ENCODE measurements at regions of chr15 and their contacts with region 1.

Region 1: DNA sequence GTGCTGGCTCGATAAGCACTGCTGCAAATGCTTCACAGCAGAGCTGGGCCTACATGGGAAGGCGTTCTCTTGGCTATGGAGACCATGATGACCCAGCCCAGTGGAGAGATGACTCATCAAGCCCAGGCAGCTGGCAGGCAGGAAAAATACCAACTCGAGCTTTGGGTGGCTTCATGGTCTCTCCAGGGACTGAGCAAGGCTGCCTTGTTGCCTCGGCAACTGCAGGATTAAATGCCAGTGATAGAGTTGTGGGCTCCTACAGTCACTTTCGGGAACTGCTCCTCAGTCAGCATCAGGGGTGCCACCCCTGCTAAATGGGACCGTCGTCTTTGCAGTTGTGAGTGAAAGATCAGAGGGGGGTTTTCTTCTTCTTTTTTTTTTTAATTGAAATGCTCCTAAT is 54.6 kb upstream of the MYZAP start:
- DNase-seq: peak in 1 of 2 donors; percentile 43
- H3K4me3 ChIP-seq: no peak overlapping the region
- H3K27ac ChIP-seq: no peak overlapping the region
- H3K4me1 ChIP-seq: peaks cover 0 to 18% of the 10 kb centered on the region in 2 donors
- H3K27me3 ChIP-seq: no peaks in the 10 kb centered on the region
- CTCF ChIP-seq: no peak
- POLR2A ChIP-seq: no peak

Region 2: DNA sequence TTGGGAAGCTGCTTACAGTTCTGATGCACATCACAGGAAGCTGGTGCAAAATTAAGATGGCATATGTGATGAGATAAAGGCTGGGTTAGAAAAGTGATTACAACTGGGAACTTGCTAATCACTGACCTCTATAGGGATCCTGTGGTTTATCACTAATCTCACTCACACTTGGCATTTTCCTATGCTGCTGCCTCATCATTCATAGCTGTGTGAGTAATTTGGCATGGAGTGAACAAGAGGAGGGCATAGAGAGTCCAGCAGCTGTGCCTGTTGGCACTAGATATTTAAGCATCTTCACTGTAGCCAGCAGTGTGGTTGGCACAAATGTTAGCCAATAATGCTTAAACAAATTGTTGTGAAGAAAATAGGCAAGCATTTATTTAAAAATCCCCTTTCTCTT is 378.5 kb before region 1 on chr15:
- intact Hi-C with region 1: loop called (anchors 10 kb)
- DNase-seq: no peak
- H3K4me3 ChIP-seq: no peak overlapping the region
- H3K27ac ChIP-seq: no peak overlapping the region
- H3K4me1 ChIP-seq: no peaks in the 10 kb centered on the region
- H3K27me3 ChIP-seq: no peaks in the 10 kb centered on the region
- CTCF ChIP-seq: no peak
- POLR2A ChIP-seq: no peak